ENCODE measurements at regions of chr6 and their contacts with region 1.

Region 1: DNA sequence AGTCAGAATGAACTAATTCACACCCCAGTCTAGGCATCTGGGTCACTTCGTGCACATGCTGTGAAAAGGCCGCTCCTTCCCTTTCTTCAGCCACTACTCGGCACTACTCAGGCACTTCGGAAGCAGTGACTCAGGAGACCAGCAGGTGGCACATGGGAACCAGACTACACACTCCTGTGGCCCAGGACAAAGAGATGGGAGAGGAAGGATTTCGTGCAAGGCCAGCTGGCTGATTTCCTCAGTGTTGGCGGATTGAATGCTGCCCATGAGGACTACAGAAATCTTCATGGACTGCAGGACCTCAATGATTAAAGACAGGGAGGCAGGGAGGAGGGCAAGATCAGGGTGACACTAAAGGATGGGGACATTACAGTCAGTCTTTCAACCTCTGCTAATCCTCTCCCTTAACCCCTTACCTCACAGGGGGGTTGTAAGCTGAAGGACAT is 117.8 kb upstream of the SPACA1 start:
- DNase-seq: peak; percentile 66 to 77 (median 68)
- ATAC-seq: peak; percentile 99
- H3K4me3 ChIP-seq: no peak overlapping the region
- H3K27ac ChIP-seq: no peak overlapping the region
- H3K4me1 ChIP-seq: no peaks in the 10 kb centered on the region
- H3K27me3 ChIP-seq: peaks cover 2 to 4% of the 10 kb centered on the region in 2 experiments; a peak in 1 of 5 replicates
- CTCF ChIP-seq: peak; percentile 87 to 89 (median 89)
- EP300 ChIP-seq: no peak
- POLR2A ChIP-seq: no peak
- RAD21 ChIP-seq: peak; percentile 93 to 94

Region 2: DNA sequence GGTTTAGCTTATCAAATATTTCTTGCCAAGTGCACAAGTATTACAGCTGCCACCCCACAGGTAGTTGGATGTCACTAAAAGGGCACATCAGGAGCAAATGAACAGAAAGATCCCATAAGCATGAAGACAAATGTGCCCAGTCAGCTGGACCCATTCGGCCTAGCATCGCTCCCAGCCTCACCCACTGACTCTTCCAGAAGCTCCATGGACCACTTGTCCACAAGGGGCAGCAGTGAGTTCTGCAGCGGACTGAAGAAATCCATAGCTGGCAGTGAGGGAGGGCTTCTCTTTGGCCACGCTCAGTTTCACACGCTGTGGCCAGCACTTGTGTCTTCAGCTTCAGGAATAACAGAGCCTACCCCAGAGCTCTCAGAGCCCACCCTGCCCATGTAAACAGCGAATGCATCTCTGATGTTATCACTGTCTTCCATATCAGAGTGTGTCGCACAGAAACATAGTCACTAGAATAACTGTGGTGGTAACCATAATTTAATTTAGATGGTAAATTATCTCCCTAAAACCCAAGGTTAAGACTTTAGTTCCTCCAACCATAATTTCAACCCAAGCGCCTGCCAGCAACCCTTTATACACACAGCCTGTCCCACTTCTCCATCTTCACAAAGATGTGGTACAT is 850.8 kb before region 1 on chr6:
- CTCF ChIA-PET with region 1: no interaction called
- POLR2A ChIA-PET with region 1: no interaction called
- in situ Hi-C with region 1: no loop called
- intact Hi-C with region 1: loop called (anchors 10 kb)
- DNase-seq: peak; percentile 75 to 83 (median 78)
- ATAC-seq: peak; percentile 99
- H3K4me3 ChIP-seq: no peak overlapping the region
- H3K27ac ChIP-seq: no peak overlapping the region
- H3K4me1 ChIP-seq: no peaks in the 10 kb centered on the region
- H3K27me3 ChIP-seq: peaks cover 2 to 4% of the 10 kb centered on the region in 2 experiments; a peak in 2 of 5 replicates
- CTCF ChIP-seq: peak; percentile 78 to 91 (median 84)
- EP300 ChIP-seq: no peak
- POLR2A ChIP-seq: no peak
- RAD21 ChIP-seq: peak in 1 of 2 experiments; percentile 29; a peak in 1 of 4 replicates

Region 3: DNA sequence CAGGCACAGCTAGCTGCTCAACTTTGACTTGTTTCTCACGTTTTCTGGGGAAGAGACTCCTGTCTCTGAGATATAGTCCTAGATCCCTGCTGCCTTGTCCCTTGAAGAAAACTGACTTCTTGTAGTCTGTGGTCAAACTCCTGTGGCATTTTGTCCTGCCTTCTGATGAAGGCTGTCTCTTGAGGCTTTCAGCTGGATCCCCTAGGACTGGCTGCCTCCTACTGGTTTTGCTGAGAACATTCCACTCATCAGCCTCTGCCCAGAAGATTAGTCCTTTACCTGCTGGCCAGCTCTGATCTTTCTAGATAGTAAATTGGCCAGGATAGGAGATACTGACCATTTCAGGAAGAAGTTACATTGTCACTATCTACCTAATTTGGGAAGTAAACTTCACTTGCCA is 308.2 kb after region 1 on chr6:
- CTCF ChIA-PET with region 1: no interaction called
- POLR2A ChIA-PET with region 1: no interaction called
- in situ Hi-C with region 1: no loop called
- intact Hi-C with region 1: loop called (anchors 1 kb)
- DNase-seq: peak in 2 of 4 experiments; percentile 8 to 19
- ATAC-seq: peak; percentile 65; the same call in 2 of the 3 replicates
- H3K4me3 ChIP-seq: no peak overlapping the region
- H3K27ac ChIP-seq: no peak overlapping the region
- H3K4me1 ChIP-seq: no peaks in the 10 kb centered on the region
- H3K27me3 ChIP-seq: no peaks in the 10 kb centered on the region
- CTCF ChIP-seq: peak; percentile 9 to 48 (median 39); a peak in 4 of 6 replicates
- EP300 ChIP-seq: no peak
- POLR2A ChIP-seq: no peak
- RAD21 ChIP-seq: peak; percentile 45 to 58

Region 4: DNA sequence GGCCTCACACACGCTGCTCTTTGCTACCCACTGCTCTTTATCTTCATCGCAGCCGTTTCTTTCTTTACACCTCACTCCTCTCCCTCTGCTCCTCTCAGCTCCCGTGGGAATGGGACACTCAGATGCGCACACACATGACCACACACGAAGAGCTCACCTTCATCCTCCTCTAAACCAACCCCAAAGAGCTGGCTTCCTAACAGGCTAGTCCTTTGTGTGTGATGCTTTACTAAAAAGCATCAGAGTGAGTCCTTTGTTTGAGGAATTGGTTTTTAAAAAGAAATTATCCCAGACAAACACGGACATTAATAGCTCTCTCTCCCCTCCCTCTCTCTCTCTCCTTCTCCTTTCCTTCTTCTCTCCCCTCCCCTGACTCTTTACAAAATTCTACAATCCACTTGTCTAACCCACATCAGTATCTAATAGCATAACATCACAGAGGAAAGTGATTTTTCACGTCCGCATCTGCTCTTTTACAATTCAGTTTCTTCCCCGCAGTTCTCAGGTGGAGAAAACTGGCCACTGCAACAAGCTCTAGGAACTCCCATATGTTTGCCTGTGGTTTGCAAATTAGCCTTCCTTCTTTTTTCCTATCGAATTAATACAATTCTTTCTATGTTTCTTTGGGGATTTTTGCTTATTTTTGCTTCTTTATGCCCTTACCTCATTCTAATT is 543.1 kb after region 1 on chr6:
- CTCF ChIA-PET with region 1: no interaction called
- POLR2A ChIA-PET with region 1: no interaction called
- in situ Hi-C with region 1: no loop called
- intact Hi-C with region 1: loop called (anchors 5 kb)
- DNase-seq: no peak
- ATAC-seq: no peak
- H3K4me3 ChIP-seq: no peak overlapping the region
- H3K27ac ChIP-seq: no peak overlapping the region
- H3K4me1 ChIP-seq: no peaks in the 10 kb centered on the region
- H3K27me3 ChIP-seq: peaks cover 4 to 10% of the 10 kb centered on the region in 2 experiments; a peak in 2 of 5 replicates
- CTCF ChIP-seq: no peak
- EP300 ChIP-seq: no peak
- POLR2A ChIP-seq: no peak
- RAD21 ChIP-seq: no peak

Region 5: GRCh38 chr6:88492824-88493223 is 563.0 kb after region 1 on chr6:
- CTCF ChIA-PET with region 1: no interaction called
- POLR2A ChIA-PET with region 1: no interaction called
- in situ Hi-C with region 1: no loop called
- intact Hi-C with region 1: loop called (anchors 5 kb)
- DNase-seq: peak; percentile 25 to 43 (median 34)
- ATAC-seq: peak; percentile 69; the same call in 2 of the 3 replicates
- H3K4me3 ChIP-seq: no peak overlapping the region
- H3K27ac ChIP-seq: no peak overlapping the region
- H3K4me1 ChIP-seq: no peaks in the 10 kb centered on the region
- H3K27me3 ChIP-seq: no peaks in the 10 kb centered on the region
- CTCF ChIP-seq: peak; percentile 25 to 40 (median 35); a peak in 3 of 6 replicates
- EP300 ChIP-seq: no peak
- POLR2A ChIP-seq: no peak
- RAD21 ChIP-seq: peak; percentile 44 to 63

Region 6: GRCh38 chr6:88870717-88871330 is 941.0 kb after region 1 on chr6:
- CTCF ChIA-PET with region 1: interaction called, 10 read pairs
- POLR2A ChIA-PET with region 1: no interaction called
- in situ Hi-C with region 1: no loop called
- intact Hi-C with region 1: loop called (anchors 1 kb)
- DNase-seq: peak; percentile 29 to 75 (median 33)
- ATAC-seq: peak; percentile 66; the same call in 2 of the 3 replicates
- H3K4me3 ChIP-seq: no peak overlapping the region
- H3K27ac ChIP-seq: no peak overlapping the region
- H3K4me1 ChIP-seq: peaks cover 0 to 9% of the 10 kb centered on the region in 2 experiments; a peak in 2 of 5 replicates
- H3K27me3 ChIP-seq: no peaks in the 10 kb centered on the region
- CTCF ChIP-seq: peak; percentile 17 to 71 (median 43); a peak in 4 of 6 replicates
- EP300 ChIP-seq: no peak
- POLR2A ChIP-seq: no peak
- RAD21 ChIP-seq: peak; percentile 72 to 75